GM13977 (cell line): ENCODE measurements at regions of chr5 and their contacts with region 1.

Region 1: GRCh38 chr5:76544268-76544926 is 78.8 kb downstream of the F2RL2 start:
- DNase-seq: peak; percentile 41
- CTCF ChIP-seq: peak; percentile 81

Region 2: GRCh38 chr5:76182396-76182795 is 362.0 kb before region 1 on chr5:
- in situ Hi-C with region 1: no loop called
- DNase-seq: no peak
- CTCF ChIP-seq: no peak

Region 3: GRCh38 chr5:76386360-76386759 is 158.0 kb before region 1 on chr5:
- in situ Hi-C with region 1: no loop called
- DNase-seq: no peak
- CTCF ChIP-seq: no peak

Region 4: DNA sequence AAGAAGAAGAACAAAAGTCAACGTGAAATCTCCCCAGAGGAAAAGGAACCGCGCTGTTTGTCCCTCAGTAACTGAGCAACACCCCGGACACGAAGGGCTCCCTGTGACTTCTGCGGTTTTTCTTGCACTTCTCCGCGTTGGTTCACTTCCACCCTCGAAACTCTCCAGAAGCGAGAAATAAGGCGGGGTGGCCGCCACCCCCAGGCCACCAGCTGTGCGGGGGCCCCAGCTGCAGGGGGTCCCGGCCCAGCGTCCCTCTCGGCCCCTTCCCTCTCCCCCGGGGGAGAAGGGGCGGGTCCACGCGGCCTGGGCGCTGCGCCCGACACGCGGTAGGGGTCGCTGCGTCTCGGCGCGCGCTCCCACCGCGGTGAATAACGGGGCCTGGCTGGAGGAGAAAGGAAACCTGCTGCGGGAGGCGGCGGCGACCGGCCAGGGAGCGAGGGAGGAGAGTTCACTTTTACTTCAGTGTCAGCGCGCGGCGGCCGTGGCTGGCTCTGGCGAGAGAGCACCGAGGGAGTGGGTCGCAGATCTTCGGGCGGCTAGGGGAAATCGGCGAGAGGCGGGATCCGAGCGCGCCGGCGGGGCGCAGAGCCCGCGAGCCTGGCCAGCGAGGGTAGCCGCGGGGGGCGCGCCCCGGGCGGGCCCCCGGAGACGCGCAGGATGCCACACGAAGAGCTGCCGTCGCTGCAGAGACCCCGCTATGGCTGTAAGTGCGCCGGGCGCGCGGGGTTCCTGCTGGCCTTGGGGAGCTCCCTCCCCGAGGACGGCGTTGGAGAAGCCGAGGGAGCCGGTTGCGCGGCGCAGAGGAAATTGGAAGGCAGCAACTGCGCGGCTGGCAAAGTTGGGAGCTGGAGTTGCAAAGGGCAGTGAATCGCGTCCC is 141.3 kb before region 1 on chr5 and contains the start of gene IQGAP2:
- in situ Hi-C with region 1: loop called (anchors 10 kb)
- DNase-seq: peak; percentile 90
- CTCF ChIP-seq: peak; percentile 94